Left cardiac atrium (tissue), 4 donors: ENCODE measurements at regions of chr2 and their contacts with region 1.

Region 1: GRCh38 chr2:227406177-227407031 is 18.7 kb upstream of the SCYGR1 start:
- DNase-seq: peak; percentile 54
- ATAC-seq: peak; percentile 88 to 90

Region 2: DNA sequence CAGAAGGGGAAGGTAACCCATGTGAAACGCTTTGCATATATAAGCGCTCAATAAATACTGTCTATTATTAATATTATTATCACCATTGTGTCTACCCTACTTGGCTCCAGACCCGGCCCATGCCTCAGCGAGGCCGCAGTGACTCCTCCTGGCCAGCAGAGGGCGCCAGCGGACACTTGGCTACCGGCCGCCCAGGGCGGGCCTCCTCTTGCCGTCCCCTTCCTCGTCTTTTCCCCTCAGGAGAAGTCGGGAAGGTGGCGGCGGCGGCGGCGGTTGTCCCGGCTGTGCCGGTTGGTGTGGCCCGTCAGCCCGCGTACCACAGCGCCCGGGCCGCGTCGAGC is 65.5 kb after region 1 on chr2 and contains the start of gene AGFG1:
- intact Hi-C with region 1: loop called in 1 of 2 experiments (anchors 10 kb)
- DNase-seq: peak; percentile 83
- ATAC-seq: peak; percentile 89 to 90
- total RNA-seq, gene AGFG1: 61.4 to 78.2 TPM

Region 3: DNA sequence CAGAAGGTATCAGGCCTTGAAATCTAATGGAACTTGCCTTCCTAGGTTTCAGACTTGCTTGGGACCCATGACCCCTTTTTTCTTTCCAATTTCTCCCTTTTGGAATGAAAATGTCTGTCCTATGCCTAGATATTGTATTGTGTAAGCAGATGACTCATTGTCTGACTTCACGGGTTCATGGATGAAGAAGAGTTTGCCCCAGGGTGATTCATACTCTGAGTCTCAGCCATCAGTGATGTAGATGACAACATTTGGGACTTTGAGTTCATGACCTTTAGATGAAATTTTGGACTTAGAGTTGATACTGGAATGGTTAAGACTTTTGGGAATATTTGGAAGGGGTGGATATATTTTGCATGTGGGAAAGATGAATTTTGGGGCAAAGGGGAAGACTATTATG is 249.1 kb after region 1 on chr2:
- intact Hi-C with region 1: no loop called
- DNase-seq: no peak
- ATAC-seq: peak in 1 of 2 donors; percentile 89